Activated naive CD4-positive, alpha-beta T cell treated with anti-CD3 and anti-CD28 coated beads for 36 hours (primary cell): ENCODE measurements at regions of chr19 and their contacts with region 1.

Region 1: DNA sequence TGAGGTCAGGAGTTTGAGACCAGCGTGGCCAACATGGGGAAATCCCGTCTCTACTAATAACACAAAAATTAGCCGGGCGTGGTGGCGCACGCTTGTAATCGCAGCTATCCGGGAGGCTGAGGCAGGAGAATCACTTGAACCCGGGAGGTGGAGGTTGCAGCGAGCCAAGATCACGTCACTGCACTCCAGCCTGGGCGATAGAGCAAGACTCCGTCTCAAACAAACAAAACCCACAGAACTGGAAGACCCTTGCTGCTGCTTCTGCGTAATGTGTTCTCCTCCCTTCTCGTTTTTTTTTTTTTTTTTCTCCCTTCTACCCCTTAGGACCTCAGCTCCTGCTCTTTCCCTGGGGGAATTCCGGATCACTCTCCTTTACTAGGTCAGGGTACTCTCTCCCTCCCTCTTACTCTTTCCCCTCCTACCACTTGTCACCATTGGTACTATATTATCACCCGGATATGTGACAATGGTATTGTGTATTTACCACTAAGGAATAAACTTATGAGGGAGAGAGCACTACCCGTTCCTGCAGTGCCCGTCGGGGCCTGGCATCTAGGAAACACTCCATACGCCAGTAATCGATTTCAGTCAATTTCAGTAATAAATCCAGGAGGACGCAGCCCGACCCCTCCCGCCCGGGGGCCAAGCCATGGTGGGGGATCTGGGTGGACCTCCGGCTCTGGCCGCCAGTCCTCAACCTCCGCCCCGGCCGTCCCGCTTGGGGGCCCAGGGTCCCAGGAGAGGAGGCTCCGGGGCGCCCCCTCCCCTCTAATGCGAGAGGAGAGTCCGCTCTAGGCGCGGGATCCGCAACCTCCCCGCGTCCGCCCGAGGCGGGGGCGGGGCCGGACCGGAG is 429 bp upstream of the GARRE1 start:
- DNase-seq: peak; percentile 90
- H3K4me3 Mint-ChIP-seq: peak overlapping the region; percentile 94
- H3K27ac Mint-ChIP-seq: peak overlapping the region; percentile 94
- H3K4me1 Mint-ChIP-seq: peaks cover 32% of the 10 kb centered on the region
- H3K27me3 Mint-ChIP-seq: no peaks in the 10 kb centered on the region

Region 2: DNA sequence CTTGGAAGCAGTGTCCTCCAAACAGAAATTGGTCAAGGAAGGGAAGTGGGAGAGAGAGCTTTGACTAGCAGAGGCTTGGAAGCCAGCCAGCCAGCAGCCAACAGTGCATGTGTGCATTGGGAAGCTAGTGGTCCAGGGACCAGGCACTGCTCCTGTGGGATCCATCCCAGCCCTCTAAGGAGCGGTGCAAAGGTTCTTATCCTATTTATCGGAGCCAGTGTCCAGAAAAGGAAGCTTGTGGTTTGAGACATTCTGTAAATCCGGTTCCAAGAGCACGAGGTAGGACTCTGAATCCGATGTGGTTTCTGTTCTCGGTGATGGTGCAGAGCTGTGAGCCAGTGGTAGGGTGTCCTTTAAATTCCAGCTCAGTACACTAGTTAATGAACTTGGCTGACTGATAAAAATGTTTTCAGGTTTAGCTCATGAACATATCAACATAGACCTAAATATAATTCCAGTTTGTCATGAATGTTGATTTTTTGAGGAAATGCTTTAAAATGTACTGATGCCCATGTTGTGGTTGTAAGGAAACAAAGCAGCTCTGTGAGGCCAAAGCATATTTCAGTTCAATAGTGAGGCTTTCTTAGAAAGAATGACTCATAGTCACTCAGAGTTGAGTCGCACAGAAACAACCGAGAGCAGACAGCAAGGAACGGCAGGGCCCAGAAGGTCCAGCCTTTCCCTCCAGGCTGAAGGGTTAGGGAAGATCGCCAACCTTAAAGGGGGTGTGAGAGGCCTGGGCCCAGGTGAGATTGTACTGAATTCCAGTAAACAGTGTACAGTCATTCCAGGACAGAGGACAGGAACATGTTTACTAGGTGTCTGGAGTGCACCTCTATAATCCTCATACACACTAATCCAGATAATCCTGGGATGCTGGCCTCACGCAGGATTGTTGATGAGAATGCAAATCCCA is 21.1 kb before region 1 on chr19:
- CTCF ChIA-PET with region 1: no interaction called
- intact Hi-C with region 1: loop called (anchors 1 kb)
- DNase-seq: peak; percentile 50
- H3K4me3 Mint-ChIP-seq: no peak overlapping the region
- H3K27ac Mint-ChIP-seq: peak overlapping the region; percentile 75
- H3K4me1 Mint-ChIP-seq: peaks cover 21% of the 10 kb centered on the region
- H3K27me3 Mint-ChIP-seq: no peaks in the 10 kb centered on the region

Region 3: GRCh38 chr19:34276614-34277013 is 22.7 kb after region 1 on chr19:
- CTCF ChIA-PET with region 1: no interaction called
- intact Hi-C with region 1: no loop called
- DNase-seq: no peak
- H3K4me3 Mint-ChIP-seq: peak overlapping the region; percentile 49
- H3K27ac Mint-ChIP-seq: peak overlapping the region; percentile 13
- H3K4me1 Mint-ChIP-seq: peaks cover 62% of the 10 kb centered on the region
- H3K27me3 Mint-ChIP-seq: no peaks in the 10 kb centered on the region

Region 4: DNA sequence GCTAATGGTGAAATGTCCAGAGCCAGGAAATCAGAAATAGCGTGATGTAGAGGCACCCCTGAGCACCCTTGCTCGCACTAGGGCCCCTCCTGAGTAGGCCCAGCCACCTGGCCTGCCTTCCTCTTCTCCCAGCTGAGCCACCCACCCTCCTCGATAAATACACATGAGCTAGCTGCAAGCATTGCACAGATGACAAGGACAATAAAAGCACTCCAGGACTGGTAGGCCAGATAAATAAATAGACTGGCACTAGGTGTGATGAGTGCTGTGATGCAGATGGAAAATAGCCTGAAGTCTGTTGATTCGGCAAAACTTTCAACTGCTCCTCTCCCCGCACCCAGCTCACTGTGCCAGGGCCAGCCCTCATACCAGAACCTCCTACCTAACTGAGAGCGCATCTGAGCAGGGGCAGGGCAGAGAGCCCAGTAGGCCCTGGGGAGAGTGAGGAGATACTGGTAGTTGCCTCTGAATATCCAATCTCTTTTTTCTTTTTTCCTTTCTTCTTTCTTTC is 56.6 kb after region 1 on chr19:
- CTCF ChIA-PET with region 1: no interaction called
- intact Hi-C with region 1: no loop called
- DNase-seq: no peak
- H3K4me3 Mint-ChIP-seq: peak overlapping the region; percentile 32
- H3K27ac Mint-ChIP-seq: peak overlapping the region; percentile 77
- H3K4me1 Mint-ChIP-seq: peaks cover 59% of the 10 kb centered on the region
- H3K27me3 Mint-ChIP-seq: no peaks in the 10 kb centered on the region

Region 5: DNA sequence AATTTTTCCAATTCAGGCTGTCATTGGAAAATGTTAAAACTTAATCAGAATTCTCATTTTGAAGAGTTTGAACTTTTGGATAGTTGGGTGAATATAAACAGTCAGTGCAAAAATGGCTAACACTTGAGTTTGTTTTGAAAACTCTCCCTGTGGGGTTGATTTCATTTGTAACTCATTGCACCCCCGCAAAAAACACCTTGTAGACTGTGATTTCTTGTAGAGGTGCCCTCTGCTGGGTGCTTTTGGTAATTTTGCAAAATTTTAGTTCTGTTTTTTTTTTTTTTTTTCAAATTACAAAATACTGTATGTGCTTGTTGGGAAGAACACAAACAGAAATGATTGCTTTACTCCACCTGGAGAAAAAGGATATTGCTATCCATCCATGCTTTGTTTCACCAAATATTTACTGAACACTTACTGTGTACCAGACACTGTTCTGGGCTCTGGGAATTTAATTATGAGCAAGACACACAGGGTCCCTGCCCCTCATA is 82.9 kb after region 1 on chr19:
- CTCF ChIA-PET with region 1: interaction called, 4 read pairs
- intact Hi-C with region 1: loop called (anchors 1 kb)
- DNase-seq: peak; percentile 69
- H3K4me3 Mint-ChIP-seq: no peak overlapping the region
- H3K27ac Mint-ChIP-seq: no peak overlapping the region
- H3K4me1 Mint-ChIP-seq: peaks cover 9% of the 10 kb centered on the region
- H3K27me3 Mint-ChIP-seq: no peaks in the 10 kb centered on the region

Region 6: DNA sequence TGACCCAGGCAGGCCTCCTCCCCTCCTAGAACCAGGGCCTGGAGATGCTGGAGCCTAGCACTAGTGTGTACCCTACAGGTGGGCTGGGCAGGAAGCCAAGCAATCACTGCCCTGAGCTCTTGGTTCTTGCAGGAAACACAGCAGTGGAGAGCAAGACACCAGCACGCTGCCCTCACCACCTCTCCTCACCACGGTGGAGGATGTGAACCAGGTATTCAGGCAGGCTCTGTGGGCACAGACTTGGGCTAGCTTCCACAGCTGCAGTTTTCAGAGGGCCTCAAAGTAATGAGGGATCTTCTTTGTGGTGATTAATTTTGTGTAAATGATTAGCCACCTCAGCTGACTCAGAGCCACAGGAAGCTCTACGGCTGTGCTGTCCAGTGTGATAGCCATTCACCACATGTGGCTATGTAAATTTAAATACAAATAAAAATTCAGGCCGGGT is 97.5 kb after region 1 on chr19:
- CTCF ChIA-PET with region 1: interaction called, 5 read pairs
- intact Hi-C with region 1: loop called (anchors 5 kb)
- DNase-seq: no peak
- H3K4me3 Mint-ChIP-seq: no peak overlapping the region
- H3K27ac Mint-ChIP-seq: peak overlapping the region; percentile 81
- H3K4me1 Mint-ChIP-seq: peaks cover 18% of the 10 kb centered on the region
- H3K27me3 Mint-ChIP-seq: no peaks in the 10 kb centered on the region